Adrenal gland (tissue), 19 donors: ENCODE measurements at regions of chr9 and their contacts with region 1.

Region 1: DNA sequence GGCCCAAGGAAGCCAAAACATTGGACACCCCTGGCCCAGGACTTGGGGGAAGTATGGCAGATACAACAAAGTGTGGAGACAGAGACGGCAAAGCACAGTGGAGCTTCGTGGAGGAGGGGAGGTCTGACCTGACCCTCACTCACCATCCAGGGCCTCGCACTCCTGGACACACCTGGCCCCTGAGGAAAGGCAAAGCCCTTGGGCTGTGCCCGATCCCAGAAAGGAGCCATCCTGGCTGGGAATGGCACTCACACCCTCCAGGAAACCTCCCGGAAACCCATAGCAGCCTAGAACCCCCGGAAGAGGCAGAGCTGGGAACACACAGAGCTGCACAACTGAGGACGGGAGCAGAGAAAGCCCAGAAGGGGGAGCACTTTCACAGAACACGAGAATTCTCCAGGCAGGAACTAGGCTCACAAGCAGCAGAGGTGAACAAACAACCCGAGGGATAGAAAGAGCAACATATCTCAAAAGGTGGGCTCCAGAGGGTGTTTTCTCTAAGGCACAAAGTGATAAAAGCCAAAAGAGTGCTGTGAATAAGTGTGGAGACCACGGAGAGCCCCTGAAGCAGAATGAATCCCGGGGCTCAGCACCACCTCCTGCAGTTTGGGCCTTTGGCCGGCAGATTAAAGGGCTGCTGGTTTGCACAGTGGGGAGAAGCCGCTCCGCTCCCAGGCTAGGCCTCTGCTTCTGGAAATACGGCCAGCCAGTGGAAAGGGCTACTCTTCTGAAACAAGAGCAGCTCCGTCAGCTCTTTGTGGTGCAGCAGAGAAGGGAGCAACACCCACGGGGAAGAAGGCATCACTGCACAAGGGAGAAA is 108.2 kb downstream of the UBE2R2 start:
- DNase-seq: peak; percentile 46 to 84 (median 62)
- H3K4me3 ChIP-seq: no peak overlapping the region
- H3K27ac ChIP-seq: no peak overlapping the region
- H3K4me1 ChIP-seq: no peaks in the 10 kb centered on the region
- H3K27me3 ChIP-seq: no peaks in the 10 kb centered on the region
- CTCF ChIP-seq: peak; percentile 21 to 58 (median 52)
- POLR2A ChIP-seq: no peak

Region 2: GRCh38 chr9:33106827-33107621 is 818.2 kb before region 1 on chr9:
- intact Hi-C with region 1: no loop called
- DNase-seq: peak; percentile 54 to 86 (median 67)
- H3K4me3 ChIP-seq: no peak overlapping the region
- H3K27ac ChIP-seq: peak overlapping the region; percentile 9 to 86 (median 60)
- H3K4me1 ChIP-seq: peaks cover 14 to 17% of the 10 kb centered on the region in 2 donors
- H3K27me3 ChIP-seq: no peaks in the 10 kb centered on the region
- CTCF ChIP-seq: no peak
- POLR2A ChIP-seq: no peak

Region 3: GRCh38 chr9:33614001-33614687 is 311.0 kb before region 1 on chr9:
- intact Hi-C with region 1: no loop called
- DNase-seq: no peak
- H3K4me3 ChIP-seq: no peak overlapping the region
- H3K27ac ChIP-seq: no peak overlapping the region
- H3K4me1 ChIP-seq: no peaks in the 10 kb centered on the region
- H3K27me3 ChIP-seq: peaks cover 5% of the 10 kb centered on the region
- CTCF ChIP-seq: no peak
- POLR2A ChIP-seq: no peak

Region 4: DNA sequence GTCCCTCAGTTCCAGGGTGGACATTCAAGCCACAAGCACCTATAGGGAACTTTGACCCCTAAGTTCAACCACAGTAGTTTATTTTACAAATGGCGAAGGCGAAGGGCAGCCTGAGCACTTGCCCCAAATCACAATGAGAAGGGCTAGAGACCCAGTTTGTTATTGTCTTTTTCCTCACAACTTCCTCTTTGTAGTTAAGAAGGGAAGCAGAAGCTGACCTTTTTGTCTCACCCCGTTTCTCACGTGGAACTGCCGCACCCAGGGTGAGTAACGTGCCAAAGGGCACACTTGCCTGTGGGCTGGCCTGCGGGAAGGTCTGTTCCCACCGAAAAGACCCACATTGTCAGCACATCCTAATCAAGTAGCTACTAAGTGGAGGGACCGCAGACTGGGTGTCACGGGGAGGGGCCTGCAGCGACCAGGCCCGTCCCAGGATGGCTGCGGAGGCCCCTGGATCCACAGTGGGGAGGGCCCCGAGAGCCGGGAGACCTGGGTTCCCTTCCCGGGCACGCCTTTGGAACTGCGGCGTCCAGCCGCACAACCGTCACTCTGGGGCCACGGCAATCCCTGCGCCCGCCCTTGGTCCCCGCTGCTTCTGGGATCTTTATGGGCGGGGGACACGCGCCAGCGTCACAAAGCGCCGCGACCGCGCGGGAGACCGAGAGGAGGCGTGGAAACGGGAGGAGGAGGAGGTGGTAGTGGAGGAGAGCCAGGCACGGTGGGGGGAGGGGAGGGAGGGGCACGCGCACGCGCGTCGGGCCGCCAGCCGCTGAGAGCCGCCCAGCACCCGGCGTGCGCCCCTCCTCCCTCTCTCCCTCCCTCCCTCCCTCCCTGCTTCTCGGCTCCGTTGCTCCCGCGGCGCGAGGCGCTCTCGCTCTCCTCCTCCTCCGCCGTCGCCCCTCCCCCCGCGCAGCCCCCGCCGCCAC is 108.6 kb before region 1 on chr9 and contains the start of gene UBE2R2:
- intact Hi-C with region 1: loop called in 1 of 2 experiments (anchors 5 kb)
- DNase-seq: peak; percentile 92 to 96 (median 94)
- H3K4me3 ChIP-seq: peak within 1 kb of the TSS; percentile 78 to 92 (median 84)
- H3K27ac ChIP-seq: peak within 1 kb of the TSS; percentile 88 to 99 (median 98)
- H3K4me1 ChIP-seq: peaks cover 32 to 58% of the 10 kb centered on the region in 2 donors
- H3K27me3 ChIP-seq: no peaks in the 10 kb centered on the region
- CTCF ChIP-seq: peak in 1 of 6 experiments; percentile 7
- POLR2A ChIP-seq: peak; percentile 63 to 83
- total RNA-seq, gene UBE2R2: 18.7 to 46.7 (median 27.2) TPM

Region 5: GRCh38 chr9:34072868-34073590 is 147.8 kb after region 1 on chr9:
- intact Hi-C with region 1: loop called in 1 of 2 experiments (anchors 10 kb)
- DNase-seq: peak in 4 of 7 donors; percentile 28 to 57 (median 33)
- H3K4me3 ChIP-seq: no peak overlapping the region
- H3K27ac ChIP-seq: peak overlapping the region in 3 of 5 donors; percentile 31 to 52 (median 38)
- H3K4me1 ChIP-seq: peaks cover 11 to 12% of the 10 kb centered on the region in 2 donors
- H3K27me3 ChIP-seq: no peaks in the 10 kb centered on the region
- CTCF ChIP-seq: no peak
- POLR2A ChIP-seq: no peak